Endothelial cell of umbilical vein (primary cell): ENCODE measurements at regions of chr5 and their contacts with region 1.

Region 1: GRCh38 chr5:55994574-55995333 is at the start of gene IL6ST:
- DNase-seq: peak; percentile 99
- H3K4me3 ChIP-seq: peak within 1 kb of the TSS; percentile 70 to 100 (median 99)
- H3K27ac ChIP-seq: peak within 1 kb of the TSS; percentile 99
- H3K4me1 ChIP-seq: peaks cover 30% of the 10 kb centered on the region
- H3K27me3 ChIP-seq: no peaks in the 10 kb centered on the region
- CTCF ChIP-seq: no peak
- POLR2A ChIP-seq: peak; percentile 95
- total RNA-seq, gene IL6ST: 345 and 361 TPM in 2 replicates

Region 2: GRCh38 chr5:56039985-56040384 is 45.2 kb after region 1 on chr5:
- CTCF ChIA-PET with region 1: no interaction called
- POLR2A ChIA-PET with region 1: no interaction called
- dilution Hi-C with region 1: no loop called
- intact Hi-C with region 1: loop called (anchors 1 kb)
- DNase-seq: peak; percentile 72
- H3K4me3 ChIP-seq: no peak overlapping the region
- H3K27ac ChIP-seq: peak overlapping the region; percentile 83
- H3K4me1 ChIP-seq: peaks cover 23% of the 10 kb centered on the region
- H3K27me3 ChIP-seq: no peaks in the 10 kb centered on the region
- CTCF ChIP-seq: no peak
- POLR2A ChIP-seq: no peak

Region 3: DNA sequence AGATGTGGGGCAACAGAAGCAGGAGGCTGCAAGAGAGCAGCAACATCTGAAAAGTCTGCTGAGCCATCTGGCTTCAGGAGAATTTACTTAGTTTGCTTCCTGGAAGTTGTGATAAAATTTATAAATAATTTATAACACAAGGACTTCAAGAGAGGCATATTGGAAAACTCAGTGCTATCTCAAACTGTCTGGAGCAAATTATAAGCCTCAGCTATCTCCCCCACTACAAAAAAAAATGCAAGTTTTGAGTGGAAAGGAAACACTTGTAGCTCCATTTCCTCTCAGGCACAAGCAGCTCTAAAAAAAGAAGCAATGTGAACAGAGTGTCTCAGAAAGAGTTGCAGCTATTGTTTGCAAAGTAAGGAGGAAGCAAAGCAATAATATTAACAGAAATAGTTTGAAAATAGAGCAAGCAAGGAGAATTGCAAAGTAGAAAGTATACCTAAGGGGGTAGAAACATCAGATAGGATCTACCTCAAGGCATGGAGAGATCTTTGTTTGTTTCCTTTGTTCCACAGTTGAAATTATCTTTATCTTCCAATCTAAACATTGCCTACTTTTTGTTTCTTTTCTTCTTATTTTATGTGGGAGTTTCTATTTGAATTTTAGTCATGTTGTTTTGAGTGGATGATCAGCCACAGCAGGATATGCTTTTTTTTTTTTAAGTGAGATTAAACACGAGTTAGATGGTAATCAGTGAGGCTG is 55.9 kb after region 1 on chr5:
- CTCF ChIA-PET with region 1: no interaction called
- POLR2A ChIA-PET with region 1: interaction called, 5 read pairs
- dilution Hi-C with region 1: no loop called
- intact Hi-C with region 1: loop called (anchors 2 kb)
- DNase-seq: peak; percentile 90
- H3K4me3 ChIP-seq: peak overlapping the region in 1 of 3 experiments; percentile 4
- H3K27ac ChIP-seq: peak overlapping the region; percentile 15
- H3K4me1 ChIP-seq: peaks cover 15% of the 10 kb centered on the region
- H3K27me3 ChIP-seq: no peaks in the 10 kb centered on the region
- CTCF ChIP-seq: no peak
- POLR2A ChIP-seq: no peak

Region 4: DNA sequence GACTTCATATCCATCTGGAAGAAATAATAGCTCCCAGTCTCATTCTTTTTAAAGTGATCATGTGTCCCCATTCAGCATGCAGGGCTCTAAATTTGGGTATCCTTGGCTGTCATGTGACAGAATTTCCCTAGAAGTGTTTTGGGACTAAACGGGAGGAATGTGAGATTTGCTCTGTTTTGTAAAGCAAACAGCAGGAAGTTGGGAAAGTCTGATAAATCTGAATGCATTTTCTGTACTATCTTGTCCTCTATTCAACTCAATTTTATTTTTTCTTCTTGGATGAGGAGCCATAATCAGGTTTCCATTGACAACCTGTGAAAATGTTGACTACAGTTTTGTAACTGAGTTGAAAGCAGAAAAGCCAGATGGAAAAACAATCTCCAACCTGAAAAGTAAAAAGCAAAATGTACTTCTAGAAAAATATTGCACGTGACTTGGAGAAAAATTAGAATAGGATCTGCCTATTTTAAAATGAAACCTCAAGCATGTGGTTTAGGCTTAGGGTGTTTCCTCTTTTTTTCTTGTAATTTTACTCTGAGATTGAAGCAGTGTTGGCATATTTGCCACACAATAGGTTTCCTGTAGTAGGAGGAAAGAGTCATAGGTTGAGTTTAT is 76.2 kb after region 1 on chr5:
- CTCF ChIA-PET with region 1: no interaction called
- POLR2A ChIA-PET with region 1: no interaction called
- dilution Hi-C with region 1: no loop called
- intact Hi-C with region 1: loop called (anchors 5 kb)
- DNase-seq: peak; percentile 37
- H3K4me3 ChIP-seq: no peak overlapping the region
- H3K27ac ChIP-seq: no peak overlapping the region
- H3K4me1 ChIP-seq: peaks cover 25% of the 10 kb centered on the region
- H3K27me3 ChIP-seq: no peaks in the 10 kb centered on the region
- CTCF ChIP-seq: no peak
- POLR2A ChIP-seq: no peak

Region 5: DNA sequence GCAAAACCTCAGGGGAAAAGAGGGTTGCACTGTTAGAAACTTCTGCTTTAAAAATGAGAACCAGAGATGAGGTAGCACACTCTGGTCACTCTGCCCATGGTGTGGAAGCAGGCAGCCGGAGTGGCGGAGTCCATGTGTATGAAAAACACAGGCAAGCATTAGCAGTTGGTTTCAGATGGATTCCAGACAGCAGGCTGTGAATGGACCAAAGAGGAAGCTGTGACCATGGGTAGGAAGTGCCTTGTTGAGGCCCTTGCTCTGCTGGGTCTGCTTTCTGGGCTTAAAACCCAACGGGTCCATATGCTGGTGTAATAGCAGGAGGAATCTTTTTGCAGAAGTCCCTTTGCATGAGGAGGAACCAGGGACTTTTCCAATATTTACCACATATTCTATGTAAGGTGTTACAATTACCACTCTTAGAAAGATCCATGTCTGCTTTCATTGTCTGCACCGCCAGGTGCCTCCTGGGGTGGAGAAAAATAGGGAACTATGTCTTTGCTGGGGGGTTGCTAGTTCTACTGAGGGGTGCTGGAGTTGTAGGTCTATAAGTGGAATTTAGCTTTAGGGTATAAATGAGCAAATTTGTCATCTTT is 161.3 kb after region 1 on chr5:
- CTCF ChIA-PET with region 1: no interaction called
- POLR2A ChIA-PET with region 1: no interaction called
- dilution Hi-C with region 1: no loop called
- intact Hi-C with region 1: no loop called
- DNase-seq: no peak
- H3K4me3 ChIP-seq: no peak overlapping the region
- H3K27ac ChIP-seq: no peak overlapping the region
- H3K4me1 ChIP-seq: no peaks in the 10 kb centered on the region
- H3K27me3 ChIP-seq: no peaks in the 10 kb centered on the region
- CTCF ChIP-seq: no peak
- POLR2A ChIP-seq: no peak

Region 6: GRCh38 chr5:56290378-56291078 is 295.8 kb after region 1 on chr5:
- CTCF ChIA-PET with region 1: no interaction called
- POLR2A ChIA-PET with region 1: no interaction called
- dilution Hi-C with region 1: no loop called
- intact Hi-C with region 1: no loop called
- DNase-seq: no peak
- H3K4me3 ChIP-seq: no peak overlapping the region
- H3K27ac ChIP-seq: no peak overlapping the region
- H3K4me1 ChIP-seq: no peaks in the 10 kb centered on the region
- H3K27me3 ChIP-seq: no peaks in the 10 kb centered on the region
- CTCF ChIP-seq: no peak
- POLR2A ChIP-seq: no peak